ENCODE measurements at regions of chr9 and their contacts with region 1.

Region 1: GRCh38 chr9:78261403-78262001 is 25.6 kb downstream of the CEP78 start:
- DNase-seq: peak in 4 of 9 donors; percentile 21 to 35 (median 32)
- ATAC-seq: no peak
- H3K4me3 ChIP-seq: no peak overlapping the region
- H3K4me3 Mint-ChIP-seq: no peak overlapping the region
- H3K27ac ChIP-seq: no peak overlapping the region
- H3K27ac Mint-ChIP-seq: peak overlapping the region in 1 of 9 donors; percentile 43
- H3K4me1 ChIP-seq: no peaks in the 10 kb centered on the region
- H3K4me1 Mint-ChIP-seq: peaks cover 0 to 3% (median 0%) of the 10 kb centered on the region in 7 donors
- H3K27me3 ChIP-seq: no peaks in the 10 kb centered on the region
- H3K27me3 Mint-ChIP-seq: no peaks in the 10 kb centered on the region

Region 2: DNA sequence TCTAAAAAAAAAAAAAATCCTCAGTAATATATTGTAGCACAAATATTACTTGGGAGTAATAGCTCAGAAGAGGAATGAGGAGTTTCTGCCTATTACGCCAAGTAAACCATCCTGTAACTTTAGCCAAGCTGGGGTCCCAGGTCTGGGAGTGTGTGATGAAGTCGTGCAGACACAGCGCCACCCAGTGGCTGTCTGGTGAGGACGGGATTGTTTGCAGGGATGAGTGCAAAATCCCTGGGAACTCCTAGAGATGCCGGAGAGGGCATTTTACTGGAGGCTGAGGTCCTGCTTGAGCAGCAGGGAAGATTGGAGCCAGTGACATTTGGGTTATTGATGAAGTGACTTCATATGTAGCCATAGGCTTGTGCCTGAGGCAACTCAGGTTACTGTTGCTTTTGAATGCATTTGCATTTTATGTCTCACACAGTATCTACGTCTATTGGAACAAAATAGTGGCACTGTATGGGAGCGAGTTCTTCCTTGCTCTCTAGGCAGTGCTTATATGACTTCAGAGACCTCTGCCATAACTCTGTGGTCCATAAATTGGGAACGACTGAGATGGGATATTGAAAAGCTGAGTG is 108.2 kb after region 1 on chr9:
- CTCF ChIA-PET with region 1: interaction called, 21 read pairs
- POLR2A ChIA-PET with region 1: no interaction called
- intact Hi-C with region 1: loop called in 1 of 2 experiments (anchors 1 kb)
- DNase-seq: peak in 8 of 9 donors; percentile 17 to 54 (median 40)
- ATAC-seq: peak; percentile 47
- H3K4me3 ChIP-seq: no peak overlapping the region
- H3K4me3 Mint-ChIP-seq: no peak overlapping the region
- H3K27ac ChIP-seq: no peak overlapping the region
- H3K27ac Mint-ChIP-seq: no peak overlapping the region
- H3K4me1 ChIP-seq: no peaks in the 10 kb centered on the region
- H3K4me1 Mint-ChIP-seq: peaks cover 0 to 3% (median 0%) of the 10 kb centered on the region in 7 donors
- H3K27me3 ChIP-seq: no peaks in the 10 kb centered on the region
- H3K27me3 Mint-ChIP-seq: peaks cover 27 to 37% (median 29%) of the 10 kb centered on the region in 5 donors

Region 3: GRCh38 chr9:78630966-78631365 is 369.5 kb after region 1 on chr9:
- CTCF ChIA-PET with region 1: no interaction called
- POLR2A ChIA-PET with region 1: no interaction called
- intact Hi-C with region 1: no loop called
- DNase-seq: no peak
- ATAC-seq: no peak
- H3K4me3 ChIP-seq: no peak overlapping the region
- H3K4me3 Mint-ChIP-seq: no peak overlapping the region
- H3K27ac ChIP-seq: no peak overlapping the region
- H3K27ac Mint-ChIP-seq: no peak overlapping the region
- H3K4me1 ChIP-seq: no peaks in the 10 kb centered on the region
- H3K4me1 Mint-ChIP-seq: no peaks in the 10 kb centered on the region
- H3K27me3 ChIP-seq: no peaks in the 10 kb centered on the region
- H3K27me3 Mint-ChIP-seq: peaks cover 0 to 6% (median 5%) of the 10 kb centered on the region in 5 donors